ENCODE measurements at regions of chr1 and their contacts with region 1.

Region 1: GRCh38 chr1:222589462-222590302 is at the start of gene TAF1A:
- DNase-seq: peak; percentile 93
- H3K4me3 Mint-ChIP-seq: peak within 1 kb of the TSS; percentile 99
- H3K27ac Mint-ChIP-seq: peak within 1 kb of the TSS; percentile 97
- H3K4me1 Mint-ChIP-seq: peaks cover 47% of the 10 kb centered on the region
- H3K27me3 Mint-ChIP-seq: no peaks in the 10 kb centered on the region
- total RNA-seq, gene TAF1A: 19.5 to 20.5 TPM

Region 2: GRCh38 chr1:222617367-222617951 is 27.8 kb after region 1 on chr1:
- CTCF ChIA-PET with region 1: no interaction called
- intact Hi-C with region 1: loop called (anchors 1 kb)
- DNase-seq: peak; percentile 92
- H3K4me3 Mint-ChIP-seq: peak overlapping the region; percentile 79
- H3K27ac Mint-ChIP-seq: peak overlapping the region; percentile 54
- H3K4me1 Mint-ChIP-seq: peaks cover 32% of the 10 kb centered on the region
- H3K27me3 Mint-ChIP-seq: peaks cover 3% of the 10 kb centered on the region

Region 3: DNA sequence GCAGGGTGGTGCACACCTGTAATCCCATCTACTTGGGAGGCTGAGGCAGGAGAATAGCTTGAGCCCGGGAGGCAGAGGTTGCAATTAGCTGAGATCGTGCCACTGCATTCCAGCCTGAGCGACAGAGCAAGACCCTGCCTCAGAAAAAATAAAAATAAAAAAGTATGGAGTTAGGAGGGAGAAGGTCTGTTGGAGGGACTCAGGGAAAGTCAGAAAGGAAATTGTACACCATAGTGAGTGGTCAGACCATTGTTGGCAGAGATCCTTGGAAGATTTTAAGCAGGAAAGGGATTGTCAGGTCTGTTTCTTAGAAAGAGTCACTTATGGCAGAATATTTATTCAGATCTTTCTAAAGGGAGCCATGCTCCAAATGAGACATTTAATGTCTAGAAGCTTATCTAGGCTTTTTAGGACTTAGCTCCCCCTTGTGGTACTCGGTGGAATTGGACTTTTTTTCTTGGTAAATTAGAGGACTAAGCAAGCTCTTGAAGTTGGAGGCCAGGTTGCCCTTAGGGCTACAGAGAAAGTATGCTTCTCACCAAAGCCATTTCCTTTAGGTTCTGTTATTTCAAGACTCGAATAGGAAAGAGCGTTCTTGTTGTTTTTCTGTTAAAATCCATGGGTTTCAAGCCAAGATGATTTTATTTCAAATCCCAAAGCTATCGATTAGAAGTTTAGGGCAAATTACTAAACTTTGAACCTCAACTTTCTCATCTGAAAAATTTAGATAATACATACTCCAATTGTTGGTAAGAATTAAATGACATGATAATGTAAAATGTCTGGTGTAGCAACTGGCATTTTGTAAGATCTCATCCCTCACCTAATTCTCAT is 44.7 kb after region 1 on chr1:
- CTCF ChIA-PET with region 1: interaction called, 10 read pairs
- intact Hi-C with region 1: loop called (anchors 1 kb)
- DNase-seq: peak; percentile 85
- H3K4me3 Mint-ChIP-seq: no peak overlapping the region
- H3K27ac Mint-ChIP-seq: no peak overlapping the region
- H3K4me1 Mint-ChIP-seq: peaks cover 4% of the 10 kb centered on the region
- H3K27me3 Mint-ChIP-seq: no peaks in the 10 kb centered on the region

Region 4: GRCh38 chr1:222643938-222644635 is 54.4 kb after region 1 on chr1:
- CTCF ChIA-PET with region 1: no interaction called
- intact Hi-C with region 1: loop called (anchors 1 kb)
- DNase-seq: peak; percentile 99
- H3K4me3 Mint-ChIP-seq: peak overlapping the region; percentile 99
- H3K27ac Mint-ChIP-seq: peak overlapping the region; percentile 92
- H3K4me1 Mint-ChIP-seq: peaks cover 32% of the 10 kb centered on the region
- H3K27me3 Mint-ChIP-seq: no peaks in the 10 kb centered on the region

Region 5: DNA sequence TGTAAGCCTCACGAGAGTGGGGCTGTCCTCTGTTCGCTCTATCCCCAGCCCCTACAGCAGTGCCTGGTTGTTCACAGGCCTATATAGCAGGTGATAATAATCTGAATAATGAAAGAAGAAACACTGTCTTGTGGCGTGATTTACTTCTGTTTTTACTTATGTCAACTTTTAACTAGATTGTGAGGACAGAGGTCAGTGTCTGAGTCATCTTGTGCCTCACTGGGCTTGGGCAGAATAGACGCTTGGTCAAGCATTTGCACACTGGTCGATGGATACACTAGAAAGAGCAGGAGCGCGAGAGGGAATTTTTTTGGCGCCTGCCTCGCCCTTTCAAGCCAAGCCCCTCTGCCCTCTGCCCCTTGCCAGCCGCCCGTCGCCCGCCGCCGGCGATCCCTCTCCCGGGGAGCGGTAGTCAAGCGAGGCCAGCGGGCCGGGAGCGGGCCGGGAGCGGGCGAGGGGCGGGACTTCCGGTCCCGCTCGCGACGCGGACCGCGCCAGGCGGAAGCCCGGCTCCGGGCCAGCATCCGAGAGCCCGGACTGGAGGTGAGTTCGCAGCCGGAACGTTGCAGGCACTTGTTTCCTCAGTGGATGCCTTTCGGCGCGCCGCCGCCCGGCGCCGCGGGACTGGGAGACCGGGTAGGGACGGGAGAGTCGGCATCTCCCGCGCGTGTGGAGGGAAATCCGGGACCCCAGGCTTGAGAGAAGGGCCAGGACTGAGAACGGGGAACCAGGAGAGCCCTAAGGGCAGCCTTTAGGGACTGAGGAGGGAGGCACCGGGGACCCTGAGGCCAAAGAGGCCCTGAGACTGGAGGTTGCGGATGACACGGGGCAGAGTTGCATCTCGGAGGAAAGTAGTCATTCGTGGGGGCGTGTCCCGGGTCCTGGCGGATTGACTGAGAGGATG is 225.1 kb after region 1 on chr1 and contains the start of gene DISP1:
- CTCF ChIA-PET with region 1: no interaction called
- intact Hi-C with region 1: loop called (anchors 10 kb)
- DNase-seq: peak; percentile 85
- H3K4me3 Mint-ChIP-seq: peak within 1 kb of the TSS; percentile 88
- H3K27ac Mint-ChIP-seq: peak within 1 kb of the TSS; percentile 82
- H3K4me1 Mint-ChIP-seq: peaks cover 21% of the 10 kb centered on the region
- H3K27me3 Mint-ChIP-seq: no peaks in the 10 kb centered on the region
- total RNA-seq, gene DISP1: 0.93 to 0.94 TPM

Region 6: DNA sequence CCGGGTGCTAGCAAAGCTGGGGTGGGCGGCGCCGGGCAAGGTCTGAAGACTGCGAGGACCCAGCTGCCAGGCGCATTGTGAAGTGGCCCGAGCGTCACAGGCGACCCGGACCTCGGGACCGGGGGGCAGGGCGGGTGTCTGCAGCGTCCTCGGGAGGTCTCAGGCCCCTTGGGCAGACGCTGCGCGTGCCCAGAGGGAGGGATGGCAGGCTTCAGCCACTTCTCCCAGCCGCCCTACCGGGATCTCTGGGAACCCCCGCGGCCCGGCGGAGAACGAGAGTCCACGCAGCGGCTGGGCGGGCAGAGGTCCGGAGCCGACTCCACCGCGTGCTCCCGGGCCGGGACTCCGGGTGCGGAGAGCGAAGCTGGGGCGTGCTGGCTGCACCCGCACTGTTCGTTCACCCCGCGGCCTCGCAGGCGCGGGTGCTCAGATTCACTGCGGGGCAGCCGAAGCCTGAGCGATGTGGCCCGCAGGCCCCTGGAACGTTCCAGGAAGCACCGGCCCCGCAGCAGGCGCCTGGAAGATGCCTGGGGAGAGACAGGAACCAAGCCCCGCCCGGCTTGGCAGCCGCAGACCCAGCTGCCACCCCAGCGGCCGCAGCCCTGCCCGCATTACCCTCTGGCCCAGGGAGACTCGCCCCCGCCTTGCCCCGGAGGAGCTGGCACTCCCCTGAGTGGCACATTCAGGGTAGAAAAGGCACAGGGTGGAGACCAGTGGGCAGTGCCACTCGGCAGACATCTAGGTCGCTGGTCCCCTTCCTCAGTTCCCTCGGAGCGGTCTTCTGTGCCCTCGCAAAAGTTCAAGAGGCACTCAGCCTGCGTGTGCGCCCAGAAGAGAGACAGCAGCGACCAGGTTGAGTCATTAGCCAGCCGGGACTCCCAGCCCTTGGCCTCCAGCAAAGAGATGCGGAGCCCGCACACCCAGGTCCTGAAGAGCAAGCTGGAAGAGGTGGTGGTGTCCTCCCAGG is 803.9 kb after region 1 on chr1 and contains the start of gene CCDC185:
- CTCF ChIA-PET with region 1: no interaction called
- intact Hi-C with region 1: no loop called
- DNase-seq: no peak
- H3K4me3 Mint-ChIP-seq: no peak within 1 kb of the TSS
- H3K27ac Mint-ChIP-seq: no peak within 1 kb of the TSS
- H3K4me1 Mint-ChIP-seq: no peaks in the 10 kb centered on the region
- H3K27me3 Mint-ChIP-seq: peaks cover 29% of the 10 kb centered on the region
- total RNA-seq, gene CCDC185: not detected

Measured in activated naive CD4-positive, alpha-beta T cell treated with anti-CD3 and anti-CD28 coated beads for 36 hours (primary cell).